CD4-positive, alpha-beta T cell (primary cell): ENCODE measurements at regions of chr6 and their contacts with region 1.

Region 1: GRCh38 chr6:1596088-1596852 is 13.4 kb upstream of the FOXC1 start:
- DNase-seq: peak; percentile 42 to 82 (median 58)
- ATAC-seq: peak; percentile 90
- H3K4me3 ChIP-seq: no peak overlapping the region
- H3K4me3 Mint-ChIP-seq: peak overlapping the region; percentile 49
- H3K27ac ChIP-seq: no peak overlapping the region
- H3K27ac Mint-ChIP-seq: no peak overlapping the region
- H3K4me1 ChIP-seq: peaks cover 8% of the 10 kb centered on the region
- H3K4me1 Mint-ChIP-seq: peaks cover 8% of the 10 kb centered on the region
- H3K27me3 ChIP-seq: peaks cover 33 to 44% of the 10 kb centered on the region in 2 experiments
- H3K27me3 Mint-ChIP-seq: peaks cover 70% of the 10 kb centered on the region
- CTCF ChIP-seq: peak; percentile 93

Region 2: GRCh38 chr6:1761477-1761877 is 165.2 kb after region 1 on chr6:
- CTCF ChIA-PET with region 1: no interaction called
- POLR2A ChIA-PET with region 1: no interaction called
- intact Hi-C with region 1: no loop called
- DNase-seq: no peak
- ATAC-seq: no peak
- H3K4me3 ChIP-seq: no peak overlapping the region
- H3K4me3 Mint-ChIP-seq: no peak overlapping the region
- H3K27ac ChIP-seq: no peak overlapping the region
- H3K27ac Mint-ChIP-seq: no peak overlapping the region
- H3K4me1 ChIP-seq: no peaks in the 10 kb centered on the region
- H3K4me1 Mint-ChIP-seq: no peaks in the 10 kb centered on the region
- H3K27me3 ChIP-seq: no peaks in the 10 kb centered on the region
- H3K27me3 Mint-ChIP-seq: no peaks in the 10 kb centered on the region
- CTCF ChIP-seq: no peak

Region 3: DNA sequence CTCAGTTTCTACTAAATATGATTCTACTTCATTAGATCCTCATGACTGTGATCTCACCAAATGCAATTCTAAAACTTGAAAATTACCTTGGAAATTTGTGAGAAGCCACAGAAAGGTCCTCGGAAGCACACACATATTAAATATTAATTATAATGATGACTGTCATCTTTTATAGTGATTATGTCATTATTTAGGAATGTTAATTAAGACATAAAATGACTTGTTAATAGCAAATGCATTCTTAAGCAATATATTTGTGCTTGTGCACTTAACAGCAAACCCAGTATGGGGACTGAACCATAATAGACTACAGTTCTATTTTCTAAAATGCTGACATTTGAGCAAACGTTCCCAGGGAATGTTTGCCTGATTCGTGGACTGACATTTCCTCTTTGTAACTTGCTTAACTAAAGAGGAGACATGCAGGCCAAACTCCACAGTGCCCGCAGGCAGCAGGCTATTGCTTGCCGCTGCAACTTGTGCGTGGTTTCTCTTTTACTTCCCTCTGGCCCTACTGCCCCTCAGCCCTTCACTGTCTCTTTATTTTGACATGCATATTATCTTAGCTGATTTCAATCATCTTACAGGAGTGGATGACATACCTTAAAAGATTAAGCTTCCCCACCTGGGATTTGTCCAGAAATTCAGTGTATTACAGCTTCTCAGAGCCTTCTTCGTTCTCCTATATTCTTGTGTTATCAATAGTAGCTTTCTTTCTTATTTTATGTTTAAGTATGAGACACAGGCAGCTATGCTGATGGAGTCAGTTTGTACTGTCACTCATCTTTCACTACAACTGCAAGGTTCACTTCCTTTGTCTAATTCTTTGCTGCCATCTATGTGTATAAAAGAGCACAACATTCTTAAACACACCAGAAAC is 507.6 kb after region 1 on chr6:
- CTCF ChIA-PET with region 1: no interaction called
- POLR2A ChIA-PET with region 1: interaction called, 3 read pairs
- intact Hi-C with region 1: loop called in 1 of 2 experiments (anchors 2 kb)
- DNase-seq: peak in 3 of 14 experiments; percentile 44 to 50 (median 45)
- ATAC-seq: peak; percentile 58
- H3K4me3 ChIP-seq: no peak overlapping the region
- H3K4me3 Mint-ChIP-seq: no peak overlapping the region
- H3K27ac ChIP-seq: no peak overlapping the region
- H3K27ac Mint-ChIP-seq: no peak overlapping the region
- H3K4me1 ChIP-seq: no peaks in the 10 kb centered on the region
- H3K4me1 Mint-ChIP-seq: no peaks in the 10 kb centered on the region
- H3K27me3 ChIP-seq: no peaks in the 10 kb centered on the region
- H3K27me3 Mint-ChIP-seq: no peaks in the 10 kb centered on the region
- CTCF ChIP-seq: peak; percentile 63

Region 4: DNA sequence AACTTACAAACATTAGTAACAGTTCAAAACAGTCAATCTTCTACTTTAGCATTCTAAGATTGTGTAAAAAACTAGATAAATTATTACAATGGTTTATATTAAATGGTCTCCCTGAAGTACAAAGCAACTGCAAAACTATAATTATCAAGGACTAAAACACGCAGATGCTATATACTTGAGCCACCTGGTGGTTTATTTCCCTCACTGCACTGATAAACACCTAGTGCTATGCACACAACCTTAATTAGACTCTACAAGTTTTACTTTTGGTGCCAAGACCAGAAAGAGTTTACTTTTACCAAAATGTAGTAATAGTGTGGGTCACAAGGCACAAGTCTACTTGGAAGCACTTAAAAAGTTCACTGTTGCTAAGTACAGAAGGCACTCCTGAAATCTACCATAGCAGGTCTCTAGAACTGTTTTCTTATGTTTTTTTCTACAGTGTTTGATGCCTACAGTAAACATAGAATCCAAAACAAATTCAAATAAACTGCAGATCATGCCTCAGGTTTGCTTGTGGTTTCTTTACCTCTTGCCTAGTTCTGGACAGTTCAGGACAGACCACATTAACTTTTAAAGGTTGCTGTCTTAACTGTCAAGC is 599.9 kb after region 1 on chr6:
- CTCF ChIA-PET with region 1: interaction called, 5 read pairs
- POLR2A ChIA-PET with region 1: no interaction called
- intact Hi-C with region 1: loop called (anchors 1 to 2 kb)
- DNase-seq: peak in 7 of 14 experiments; percentile 7 to 69 (median 47)
- ATAC-seq: peak; percentile 58
- H3K4me3 ChIP-seq: no peak overlapping the region
- H3K4me3 Mint-ChIP-seq: no peak overlapping the region
- H3K27ac ChIP-seq: no peak overlapping the region
- H3K27ac Mint-ChIP-seq: no peak overlapping the region
- H3K4me1 ChIP-seq: no peaks in the 10 kb centered on the region
- H3K4me1 Mint-ChIP-seq: peaks cover 4% of the 10 kb centered on the region
- H3K27me3 ChIP-seq: no peaks in the 10 kb centered on the region
- H3K27me3 Mint-ChIP-seq: no peaks in the 10 kb centered on the region
- CTCF ChIP-seq: peak; percentile 82

Region 5: GRCh38 chr6:2353412-2354137 is 757.3 kb after region 1 on chr6:
- CTCF ChIA-PET with region 1: interaction called, 6 read pairs
- POLR2A ChIA-PET with region 1: no interaction called
- intact Hi-C with region 1: loop called (anchors 2 kb)
- DNase-seq: peak; percentile 14 to 61 (median 28)
- ATAC-seq: no peak
- H3K4me3 ChIP-seq: no peak overlapping the region
- H3K4me3 Mint-ChIP-seq: no peak overlapping the region
- H3K27ac ChIP-seq: no peak overlapping the region
- H3K27ac Mint-ChIP-seq: no peak overlapping the region
- H3K4me1 ChIP-seq: no peaks in the 10 kb centered on the region
- H3K4me1 Mint-ChIP-seq: no peaks in the 10 kb centered on the region
- H3K27me3 ChIP-seq: no peaks in the 10 kb centered on the region
- H3K27me3 Mint-ChIP-seq: no peaks in the 10 kb centered on the region
- CTCF ChIP-seq: peak; percentile 71

Region 6: DNA sequence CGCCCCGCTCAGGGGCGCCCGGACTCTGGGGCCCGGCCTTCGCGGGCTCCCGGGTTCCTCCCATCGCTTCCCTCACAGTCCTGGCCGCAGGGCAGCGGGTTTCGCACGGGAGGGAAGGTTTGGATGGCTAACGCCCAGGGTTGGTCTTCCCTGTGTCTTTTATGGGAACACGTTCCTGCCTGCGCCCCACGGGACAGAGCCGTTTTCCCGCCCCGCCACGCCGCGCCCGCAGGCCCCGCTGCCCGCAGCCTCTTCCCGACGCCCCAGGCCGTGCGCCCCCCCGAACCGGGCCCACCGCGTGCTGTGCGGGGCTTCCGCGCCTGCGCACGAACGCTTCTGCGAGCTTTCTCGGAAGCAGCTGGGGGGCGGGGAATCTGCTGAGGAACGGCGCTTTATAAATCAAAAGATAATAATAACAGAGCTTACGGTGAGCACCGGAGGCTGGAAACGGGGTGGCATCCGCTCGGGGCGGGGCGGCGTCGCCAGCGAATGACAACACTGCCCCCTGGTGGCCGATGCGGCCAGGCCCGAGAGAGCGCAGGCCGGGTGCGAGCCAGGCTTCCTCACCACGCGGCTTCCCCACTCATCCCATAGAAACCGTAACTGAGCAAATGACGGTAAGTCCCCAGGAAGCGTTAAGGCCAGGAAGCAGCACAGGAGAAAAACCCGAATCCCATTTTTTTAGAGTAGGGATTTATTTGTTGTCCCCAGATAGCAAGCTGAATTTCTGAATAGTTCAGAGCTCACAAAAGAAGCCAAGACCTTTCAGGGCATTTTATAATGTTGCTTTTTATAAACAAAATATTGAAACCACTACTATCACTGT is 1038.1 kb after region 1 on chr6:
- CTCF ChIA-PET with region 1: interaction called, 28 read pairs
- POLR2A ChIA-PET with region 1: interaction called, 5 read pairs
- intact Hi-C with region 1: loop called (anchors 1 kb)
- DNase-seq: peak; percentile 68 to 90 (median 80)
- ATAC-seq: peak; percentile 94
- H3K4me3 ChIP-seq: peak overlapping the region; percentile 44
- H3K4me3 Mint-ChIP-seq: peak overlapping the region; percentile 84
- H3K27ac ChIP-seq: no peak overlapping the region
- H3K27ac Mint-ChIP-seq: no peak overlapping the region
- H3K4me1 ChIP-seq: peaks cover 9% of the 10 kb centered on the region
- H3K4me1 Mint-ChIP-seq: no peaks in the 10 kb centered on the region
- H3K27me3 ChIP-seq: peaks cover 0 to 5% of the 10 kb centered on the region in 2 experiments
- H3K27me3 Mint-ChIP-seq: peaks cover 22% of the 10 kb centered on the region
- CTCF ChIP-seq: peak; percentile 97

Region 7: DNA sequence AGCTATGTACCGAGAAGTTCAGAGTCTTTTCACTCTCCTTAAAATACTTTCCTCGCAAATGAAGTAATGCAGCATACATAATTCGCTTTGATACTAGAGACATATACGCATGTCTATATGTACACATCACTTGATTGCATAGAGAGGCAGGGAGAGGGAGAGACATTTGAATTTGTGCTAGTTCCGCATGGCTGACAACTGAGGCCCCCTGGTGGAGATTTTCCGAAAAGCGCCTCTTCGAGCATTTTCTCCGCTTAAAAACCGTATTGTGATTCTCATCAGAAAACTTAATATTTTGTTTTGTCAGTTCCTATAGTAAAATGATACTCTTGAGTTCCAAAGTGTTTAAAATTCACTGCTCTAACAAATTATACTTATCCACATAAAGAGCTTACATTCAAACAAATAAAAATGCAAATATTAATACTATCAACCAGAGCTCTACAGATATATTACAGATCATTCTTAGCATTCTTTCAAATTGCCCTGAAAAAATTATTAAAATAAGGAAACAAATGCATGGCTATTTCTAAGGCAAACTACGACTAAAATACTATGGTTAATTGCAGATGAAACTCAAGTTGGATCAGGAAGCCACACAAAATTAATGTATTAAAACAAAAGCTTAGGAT is 1153.8 kb after region 1 on chr6:
- CTCF ChIA-PET with region 1: interaction called, 3 read pairs
- POLR2A ChIA-PET with region 1: no interaction called
- intact Hi-C with region 1: loop called (anchors 2 kb)
- DNase-seq: peak; percentile 47 to 82 (median 62)
- ATAC-seq: peak; percentile 82
- H3K4me3 ChIP-seq: no peak overlapping the region
- H3K4me3 Mint-ChIP-seq: no peak overlapping the region
- H3K27ac ChIP-seq: no peak overlapping the region
- H3K27ac Mint-ChIP-seq: no peak overlapping the region
- H3K4me1 ChIP-seq: no peaks in the 10 kb centered on the region
- H3K4me1 Mint-ChIP-seq: peaks cover 6% of the 10 kb centered on the region
- H3K27me3 ChIP-seq: peaks cover 0 to 7% of the 10 kb centered on the region in 2 experiments
- H3K27me3 Mint-ChIP-seq: peaks cover 29% of the 10 kb centered on the region
- CTCF ChIP-seq: peak; percentile 95